ENCODE measurements at regions of chr2 and their contacts with region 1.

Region 1: GRCh38 chr2:222483513-222484039 is 59.2 kb downstream of the SGPP2 start:
- DNase-seq: no peak
- H3K4me3 ChIP-seq: no peak overlapping the region
- H3K27ac ChIP-seq: no peak overlapping the region
- H3K4me1 ChIP-seq: no peaks in the 10 kb centered on the region
- H3K27me3 ChIP-seq: no peaks in the 10 kb centered on the region
- CTCF ChIP-seq: no peak

Region 2: DNA sequence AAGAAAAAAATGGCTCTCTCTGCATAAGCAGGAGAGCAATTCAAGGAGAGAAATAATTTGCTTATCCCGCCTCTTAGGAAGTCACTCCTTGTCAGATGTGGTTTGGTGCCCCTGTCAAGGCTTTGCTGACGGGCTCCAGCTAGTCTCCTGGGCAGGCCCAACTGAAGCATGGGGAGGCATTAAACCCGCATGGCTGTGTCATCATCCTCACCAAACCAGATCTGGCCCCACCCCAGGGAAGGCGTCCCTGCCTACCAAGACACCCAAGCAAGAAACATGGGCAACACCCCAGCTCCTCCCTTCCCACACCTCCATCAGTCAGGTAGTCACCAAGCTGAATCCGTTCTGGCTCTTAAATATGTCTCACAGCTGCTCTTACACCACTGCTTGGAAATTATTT is 48.7 kb after region 1 on chr2:
- CTCF ChIA-PET with region 1: no interaction called
- dilution Hi-C with region 1: loop called (anchors 5 kb)
- in situ Hi-C with region 1: no loop called
- intact Hi-C with region 1: no loop called
- DNase-seq: peak; percentile 35
- H3K4me3 ChIP-seq: no peak overlapping the region
- H3K27ac ChIP-seq: no peak overlapping the region
- H3K4me1 ChIP-seq: no peaks in the 10 kb centered on the region
- H3K27me3 ChIP-seq: no peaks in the 10 kb centered on the region
- CTCF ChIP-seq: no peak